Colonic mucosa (tissue), 4 donors: ENCODE measurements at regions of chr9 and their contacts with region 1.

Region 1: DNA sequence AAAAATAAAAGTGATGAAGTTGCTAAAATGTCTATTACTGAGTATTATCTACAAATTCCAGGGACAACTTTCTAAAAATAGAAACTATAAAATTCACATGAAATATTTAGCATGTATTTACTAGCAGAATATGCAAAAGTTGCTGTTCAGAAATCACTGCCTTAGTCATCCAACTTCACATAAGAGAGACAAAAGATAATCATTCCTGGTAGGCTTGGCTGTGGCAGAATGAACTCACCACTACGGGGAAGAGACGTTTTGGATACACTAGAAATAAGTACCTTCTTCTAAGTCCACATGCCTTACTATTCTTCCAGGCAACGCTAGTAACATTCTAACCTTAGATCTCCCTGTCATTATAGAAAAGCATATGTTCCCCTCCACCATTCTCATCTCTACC is 272.2 kb downstream of the BNC2 start:
- DNase-seq: no peak
- H3K4me3 ChIP-seq: no peak overlapping the region
- H3K27ac ChIP-seq: no peak overlapping the region
- H3K4me1 ChIP-seq: no peaks in the 10 kb centered on the region
- H3K27me3 ChIP-seq: no peaks in the 10 kb centered on the region
- CTCF ChIP-seq: no peak

Region 2: DNA sequence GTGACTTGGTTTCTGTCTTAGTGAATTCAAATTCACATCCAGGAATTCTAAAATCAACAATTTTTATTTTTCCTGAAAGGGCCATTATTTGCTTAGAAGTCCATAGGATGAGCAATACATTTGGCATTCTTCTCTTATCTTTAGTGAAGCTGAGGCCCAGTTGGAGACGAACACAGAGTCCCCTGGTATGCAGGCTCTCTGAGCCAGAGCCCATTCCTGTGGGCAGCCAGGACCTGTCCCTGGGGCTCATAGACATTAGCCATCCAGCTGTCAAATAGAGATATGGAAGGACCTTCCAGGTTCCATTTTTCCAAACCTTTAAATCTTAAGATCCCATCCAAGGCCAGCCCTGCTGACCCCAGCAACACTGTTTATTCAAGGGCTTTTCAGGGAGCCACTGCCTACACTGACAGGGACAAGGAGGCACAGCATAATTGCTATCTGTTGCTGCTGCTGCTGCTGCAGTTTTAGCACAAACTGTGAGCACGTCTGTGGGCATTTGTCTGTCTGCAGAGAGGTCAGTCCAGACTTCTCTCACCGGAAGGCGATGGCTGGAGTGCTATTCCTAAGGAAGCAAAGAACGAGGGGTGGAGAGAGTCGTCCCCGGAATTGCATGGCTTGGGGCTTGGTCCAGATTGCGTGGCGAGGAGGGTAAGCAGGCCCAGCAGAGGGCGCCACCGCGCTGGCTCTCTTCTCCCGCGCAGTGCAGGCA is 406.5 kb before region 1 on chr9:
- intact Hi-C with region 1: loop called (anchors 10 kb)
- DNase-seq: peak; percentile 78
- H3K4me3 ChIP-seq: no peak overlapping the region
- H3K27ac ChIP-seq: no peak overlapping the region
- H3K4me1 ChIP-seq: no peaks in the 10 kb centered on the region
- H3K27me3 ChIP-seq: no peaks in the 10 kb centered on the region
- CTCF ChIP-seq: peak; percentile 77

Region 3: GRCh38 chr9:16530669-16531642 is 67.4 kb before region 1 on chr9:
- intact Hi-C with region 1: loop called (anchors 10 kb)
- DNase-seq: no peak
- H3K4me3 ChIP-seq: no peak overlapping the region
- H3K27ac ChIP-seq: no peak overlapping the region
- H3K4me1 ChIP-seq: no peaks in the 10 kb centered on the region
- H3K27me3 ChIP-seq: no peaks in the 10 kb centered on the region
- CTCF ChIP-seq: no peak